Endothelial cell of umbilical vein (primary cell): ENCODE measurements at regions of chr1 and their contacts with region 1.

Region 1: GRCh38 chr1:166133276-166133841 is 33.4 kb downstream of the FAM78B start:
- DNase-seq: no peak
- H3K4me3 ChIP-seq: no peak overlapping the region
- H3K27ac ChIP-seq: no peak overlapping the region
- H3K4me1 ChIP-seq: no peaks in the 10 kb centered on the region
- H3K27me3 ChIP-seq: no peaks in the 10 kb centered on the region
- CTCF ChIP-seq: peak; percentile 9 to 22
- POLR2A ChIP-seq: no peak

Region 2: GRCh38 chr1:165965857-165966256 is 167.5 kb before region 1 on chr1:
- CTCF ChIA-PET with region 1: no interaction called
- POLR2A ChIA-PET with region 1: no interaction called
- dilution Hi-C with region 1: no loop called
- intact Hi-C with region 1: no loop called
- DNase-seq: no peak
- H3K4me3 ChIP-seq: no peak overlapping the region
- H3K27ac ChIP-seq: no peak overlapping the region
- H3K4me1 ChIP-seq: no peaks in the 10 kb centered on the region
- H3K27me3 ChIP-seq: no peaks in the 10 kb centered on the region
- CTCF ChIP-seq: no peak
- POLR2A ChIP-seq: no peak

Region 3: DNA sequence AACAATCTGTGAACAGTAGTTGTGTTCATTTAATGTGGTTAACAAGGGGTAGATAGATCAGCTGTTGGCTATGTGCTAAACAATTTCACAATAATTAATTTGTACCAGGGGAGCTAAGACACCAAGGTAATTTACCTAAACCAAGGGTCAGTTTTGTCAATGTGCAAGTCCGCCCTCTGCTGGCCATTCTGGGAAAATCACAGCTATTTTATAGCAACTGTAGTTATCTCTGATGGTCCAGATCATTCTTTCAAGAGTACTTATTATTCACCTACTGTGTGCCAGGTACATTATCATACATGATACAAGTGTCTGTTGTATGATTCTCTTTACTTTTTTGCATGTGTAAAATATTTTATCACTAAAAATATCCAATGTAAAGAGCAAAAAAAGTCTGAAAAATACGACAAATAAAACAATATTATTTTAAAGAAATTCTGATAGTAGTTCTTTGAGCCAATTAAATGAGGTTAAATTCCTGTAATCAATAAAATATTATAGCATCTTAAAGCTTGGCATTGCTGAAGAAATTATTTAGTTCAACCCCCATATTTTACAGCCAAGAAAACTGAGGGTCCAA is 345.8 kb after region 1 on chr1:
- CTCF ChIA-PET with region 1: no interaction called
- POLR2A ChIA-PET with region 1: no interaction called
- dilution Hi-C with region 1: no loop called
- intact Hi-C with region 1: loop called (anchors 2 kb)
- DNase-seq: peak; percentile 53
- H3K4me3 ChIP-seq: no peak overlapping the region
- H3K27ac ChIP-seq: no peak overlapping the region
- H3K4me1 ChIP-seq: no peaks in the 10 kb centered on the region
- H3K27me3 ChIP-seq: no peaks in the 10 kb centered on the region
- CTCF ChIP-seq: peak; percentile 53 to 59
- POLR2A ChIP-seq: no peak